ENCODE measurements at regions of chrX and their contacts with region 1.

Region 1: DNA sequence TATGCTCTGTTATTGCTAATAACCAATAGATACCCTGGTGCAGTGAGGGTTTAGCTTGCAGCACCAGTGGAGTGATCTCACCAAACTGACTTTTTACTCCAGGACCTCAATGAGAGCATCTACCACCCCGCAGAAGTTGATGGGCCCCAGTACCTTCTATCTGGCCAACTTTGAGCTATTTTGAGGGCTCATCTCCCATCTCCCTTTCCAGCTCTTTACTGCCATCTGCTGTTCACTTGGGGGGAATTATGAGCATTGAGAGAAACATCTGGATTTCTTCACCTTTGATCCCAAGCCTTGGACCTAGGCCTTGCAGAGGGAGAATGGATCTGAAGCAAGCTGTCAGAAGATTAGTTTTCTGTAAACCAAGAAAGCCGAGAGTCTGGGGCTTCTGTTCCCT is 143.6 kb downstream of the TMEM164 start:
- H3K4me3 Mint-ChIP-seq: no peak overlapping the region
- H3K27ac Mint-ChIP-seq: no peak overlapping the region
- H3K4me1 Mint-ChIP-seq: peaks cover 37% of the 10 kb centered on the region
- H3K27me3 Mint-ChIP-seq: no peaks in the 10 kb centered on the region

Region 2: GRCh38 chrX:109714340-109714958 is 432.1 kb before region 1 on chrX:
- intact Hi-C with region 1: loop called (anchors 10 kb)
- H3K4me3 Mint-ChIP-seq: no peak overlapping the region
- H3K27ac Mint-ChIP-seq: no peak overlapping the region
- H3K4me1 Mint-ChIP-seq: peaks cover 29% of the 10 kb centered on the region
- H3K27me3 Mint-ChIP-seq: no peaks in the 10 kb centered on the region

Region 3: GRCh38 chrX:109911046-109911445 is 235.5 kb before region 1 on chrX:
- intact Hi-C with region 1: loop called (anchors 5 kb)
- H3K4me3 Mint-ChIP-seq: no peak overlapping the region
- H3K27ac Mint-ChIP-seq: no peak overlapping the region
- H3K4me1 Mint-ChIP-seq: no peaks in the 10 kb centered on the region
- H3K27me3 Mint-ChIP-seq: no peaks in the 10 kb centered on the region

Region 4: DNA sequence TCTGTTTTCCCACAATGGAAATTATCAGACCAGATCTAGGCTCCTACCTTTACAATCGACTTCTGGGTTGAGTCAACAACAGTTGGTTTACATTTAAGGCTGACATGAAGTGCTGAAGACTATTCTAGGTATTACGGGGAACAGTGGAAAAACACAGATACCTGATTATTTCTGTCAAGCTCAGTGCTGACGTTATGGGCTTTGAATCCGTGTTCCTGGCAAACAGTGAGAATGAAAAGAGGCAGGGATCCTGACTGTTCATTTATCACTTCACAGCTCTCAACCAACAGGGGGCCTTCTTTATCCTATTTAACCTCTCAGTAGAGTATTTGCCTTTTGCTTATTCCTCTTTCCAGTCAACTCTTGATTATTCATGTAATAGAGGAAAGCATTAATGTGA is 100.5 kb before region 1 on chrX:
- intact Hi-C with region 1: loop called (anchors 10 kb)
- H3K4me3 Mint-ChIP-seq: no peak overlapping the region
- H3K27ac Mint-ChIP-seq: no peak overlapping the region
- H3K4me1 Mint-ChIP-seq: peaks cover 9% of the 10 kb centered on the region
- H3K27me3 Mint-ChIP-seq: no peaks in the 10 kb centered on the region